A549 (cell line): ENCODE measurements at regions of chr7 and their contacts with region 1.

Region 1: DNA sequence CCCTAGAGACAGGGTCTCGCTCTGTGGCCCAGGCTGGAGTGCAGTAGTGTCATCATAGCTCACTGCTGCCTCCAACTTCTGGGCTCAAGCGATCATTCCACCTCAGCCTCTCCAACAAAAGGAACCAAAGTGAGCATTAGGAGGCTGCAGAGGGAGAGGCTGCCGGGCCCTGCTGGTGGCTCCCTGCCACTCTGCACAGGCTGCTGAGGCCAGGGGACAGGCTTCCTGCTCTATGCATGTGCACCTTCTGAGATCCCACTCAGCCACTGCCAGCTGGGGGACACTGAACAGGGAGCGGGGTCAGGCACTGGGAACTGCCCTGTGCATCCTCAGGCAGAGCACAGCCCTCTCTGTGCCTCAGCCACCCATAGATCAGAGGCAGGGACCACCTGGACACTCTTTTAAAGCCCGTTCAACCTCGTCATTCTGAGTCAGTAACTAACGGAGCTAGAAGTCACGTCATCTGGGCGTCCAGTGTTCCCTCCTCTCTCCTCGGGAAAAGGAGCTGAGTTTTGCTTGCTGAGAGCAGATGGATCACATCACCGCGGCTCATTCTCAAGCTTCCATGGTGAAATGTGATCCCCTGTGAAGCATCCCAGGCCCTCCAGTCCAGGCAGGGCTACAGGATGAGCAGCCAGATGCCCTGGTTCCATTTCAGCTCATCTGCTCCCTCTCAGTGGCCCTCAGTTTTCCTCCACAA is 109.6 kb downstream of the MYL10 start:
- DNase-seq: no peak
- ATAC-seq: peak in 1 of 2 experiments; percentile 56; a peak in 4 of 6 replicates
- H3K4me3 ChIP-seq: no peak overlapping the region
- H3K27ac ChIP-seq: no peak overlapping the region
- H3K4me1 ChIP-seq: no peaks in the 10 kb centered on the region
- CTCF ChIP-seq: no peak
- EP300 ChIP-seq: no peak
- POLR2A ChIP-seq: no peak
- RAD21 ChIP-seq: no peak

Region 2: GRCh38 chr7:101537205-101537604 is 17.7 kb after region 1 on chr7:
- CTCF ChIA-PET with region 1: interaction called, 13 read pairs
- POLR2A ChIA-PET with region 1: no interaction called
- DNase-seq: no peak
- ATAC-seq: no peak
- H3K4me3 ChIP-seq: no peak overlapping the region
- H3K27ac ChIP-seq: no peak overlapping the region
- H3K4me1 ChIP-seq: no peaks in the 10 kb centered on the region
- CTCF ChIP-seq: no peak
- EP300 ChIP-seq: no peak
- POLR2A ChIP-seq: no peak
- RAD21 ChIP-seq: no peak

Region 3: DNA sequence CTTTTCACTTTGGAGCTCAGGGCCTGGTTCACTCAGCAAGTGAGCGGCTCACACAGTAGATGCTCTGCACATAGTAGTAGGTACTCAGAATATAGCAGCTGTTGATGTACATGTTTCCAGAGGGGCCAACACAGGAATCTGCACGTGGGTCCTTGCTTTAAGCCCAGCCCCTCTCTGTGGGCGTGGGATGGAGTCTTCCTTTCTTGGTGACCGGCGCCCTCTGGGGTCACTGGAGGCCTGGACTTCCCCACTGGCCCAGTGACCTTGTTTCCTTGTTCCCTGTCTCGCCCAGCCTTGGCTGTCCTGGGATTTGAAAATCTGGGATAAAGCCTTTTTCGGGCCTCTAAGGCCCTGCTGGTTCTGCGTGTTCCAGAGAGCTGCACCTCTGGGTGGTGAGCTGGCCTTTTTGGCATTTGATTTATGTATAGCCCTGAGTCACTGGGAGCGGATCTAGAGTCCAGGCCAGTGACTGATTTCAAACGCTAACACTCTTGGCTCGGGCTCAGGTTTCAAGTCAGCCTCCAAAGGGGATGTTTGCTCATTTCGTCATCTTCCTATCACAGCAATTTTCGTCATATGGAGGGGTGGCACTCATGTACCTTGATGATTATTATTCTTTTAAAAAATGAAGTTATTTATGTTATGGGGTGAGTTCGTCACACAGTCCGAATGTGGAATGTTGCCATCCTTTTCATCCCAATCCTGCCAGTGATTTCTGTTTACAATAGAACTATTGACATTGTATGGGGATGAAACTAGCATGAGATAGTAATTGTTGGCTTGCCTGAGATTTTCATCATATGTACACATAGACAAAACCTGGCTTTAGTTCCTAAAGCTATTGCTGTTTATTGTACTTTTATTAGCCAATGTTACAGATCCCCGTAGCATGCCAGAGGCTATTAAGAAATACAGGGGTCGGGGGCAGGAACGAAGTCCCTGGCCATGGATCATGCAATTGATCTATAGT is 363.4 kb after region 1 on chr7:
- CTCF ChIA-PET with region 1: no interaction called
- POLR2A ChIA-PET with region 1: no interaction called
- DNase-seq: peak; percentile 96 to 100
- ATAC-seq: peak; percentile 92 to 94
- H3K4me3 ChIP-seq: 0 out of 3 replicates have a peak overlapping the region, but pooled peaks have one; percentile 4
- H3K27ac ChIP-seq: peak overlapping the region; percentile 96
- H3K4me1 ChIP-seq: peaks cover 89% of the 10 kb centered on the region
- CTCF ChIP-seq: peak; percentile 19; the same call in 2 of the 3 replicates
- EP300 ChIP-seq: peak; percentile 99 to 100
- POLR2A ChIP-seq: no peak
- RAD21 ChIP-seq: peak in 1 of 2 experiments; percentile 40; a peak in 4 of 5 replicates